ENCODE measurements at regions of chr12 and their contacts with region 1.

Region 1: DNA sequence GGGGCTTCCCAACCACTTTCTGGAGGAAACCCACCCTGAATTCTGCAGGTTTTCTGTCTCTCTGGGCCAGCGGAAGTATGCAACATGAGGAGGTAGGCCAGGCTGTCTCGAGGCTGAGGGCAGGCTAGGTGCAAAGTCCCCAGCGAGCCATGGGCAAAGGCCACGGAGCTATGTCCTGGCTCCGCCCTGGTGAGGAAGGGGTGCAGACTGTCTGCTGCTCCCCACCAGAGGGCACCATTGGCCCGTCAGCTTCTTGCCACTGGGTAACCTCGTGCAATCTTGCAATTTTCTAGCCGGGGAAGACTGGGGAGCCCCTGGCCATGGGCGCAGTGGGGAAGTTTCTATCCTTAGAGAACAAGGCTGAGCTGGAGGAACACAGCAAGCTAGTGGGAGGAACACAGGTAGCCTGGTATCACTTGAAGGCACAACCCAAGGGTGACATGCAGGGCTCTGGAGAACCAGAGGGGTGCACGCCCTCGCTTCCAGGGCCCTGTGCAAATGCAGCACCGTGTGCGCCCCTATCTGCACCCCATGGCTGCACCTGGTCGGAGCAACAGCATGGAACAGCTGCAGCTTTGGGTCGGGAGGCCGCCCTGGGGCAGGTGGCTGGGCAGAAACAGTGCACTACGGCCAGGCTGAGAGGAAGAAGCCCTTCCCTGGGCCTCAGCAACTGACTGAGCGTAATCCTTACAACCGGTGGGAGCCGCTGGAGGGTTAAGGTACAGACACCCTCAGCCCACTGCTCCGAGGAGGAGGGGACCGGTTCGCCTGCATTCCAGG is 27.6 kb upstream of the RPLP0 start:
- DNase-seq: peak; percentile 96
- H3K4me3 Mint-ChIP-seq: peak overlapping the region; percentile 49
- H3K27ac Mint-ChIP-seq: peak overlapping the region; percentile 84
- H3K4me1 Mint-ChIP-seq: peaks cover 88% of the 10 kb centered on the region
- H3K27me3 Mint-ChIP-seq: no peaks in the 10 kb centered on the region

Region 2: DNA sequence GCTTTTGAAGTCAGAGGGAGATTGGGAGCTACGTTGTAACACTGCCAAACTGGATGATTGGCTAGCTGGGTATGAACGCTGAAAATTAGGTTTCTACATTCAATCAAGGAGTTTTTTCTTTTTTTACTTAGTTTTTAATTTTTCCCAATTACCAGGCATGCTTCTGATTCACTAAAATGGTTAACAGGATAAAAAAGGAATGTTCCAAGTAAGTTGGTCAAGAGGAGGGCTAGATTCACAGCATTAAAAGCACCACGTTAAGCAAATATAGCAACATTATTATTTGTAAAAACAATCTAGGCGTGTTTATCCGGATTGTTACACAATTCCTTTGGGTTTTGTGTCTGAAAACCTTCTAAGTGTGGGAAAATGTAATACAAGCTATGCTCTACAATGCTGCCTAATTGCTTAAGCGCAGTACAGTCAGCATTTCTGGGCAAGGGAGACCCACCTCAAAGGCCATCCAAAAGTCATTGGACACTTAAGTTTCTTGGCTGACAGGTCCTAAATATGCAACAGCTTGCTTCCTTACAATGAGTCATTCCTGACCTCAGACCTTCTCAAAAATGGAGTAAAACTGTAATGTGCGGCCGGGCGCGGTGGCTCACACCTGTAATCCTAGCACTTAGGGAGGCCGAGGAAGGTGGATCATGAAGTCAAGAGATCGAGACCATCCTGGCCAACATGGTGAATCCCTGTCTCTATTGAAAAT is 28.7 kb before region 1 on chr12:
- CTCF ChIA-PET with region 1: interaction called, 75 read pairs
- intact Hi-C with region 1: loop called (anchors 1 kb)
- DNase-seq: peak; percentile 51
- H3K4me3 Mint-ChIP-seq: peak overlapping the region; percentile 93
- H3K27ac Mint-ChIP-seq: peak overlapping the region; percentile 99
- H3K4me1 Mint-ChIP-seq: peaks cover 42% of the 10 kb centered on the region
- H3K27me3 Mint-ChIP-seq: no peaks in the 10 kb centered on the region

Region 3: DNA sequence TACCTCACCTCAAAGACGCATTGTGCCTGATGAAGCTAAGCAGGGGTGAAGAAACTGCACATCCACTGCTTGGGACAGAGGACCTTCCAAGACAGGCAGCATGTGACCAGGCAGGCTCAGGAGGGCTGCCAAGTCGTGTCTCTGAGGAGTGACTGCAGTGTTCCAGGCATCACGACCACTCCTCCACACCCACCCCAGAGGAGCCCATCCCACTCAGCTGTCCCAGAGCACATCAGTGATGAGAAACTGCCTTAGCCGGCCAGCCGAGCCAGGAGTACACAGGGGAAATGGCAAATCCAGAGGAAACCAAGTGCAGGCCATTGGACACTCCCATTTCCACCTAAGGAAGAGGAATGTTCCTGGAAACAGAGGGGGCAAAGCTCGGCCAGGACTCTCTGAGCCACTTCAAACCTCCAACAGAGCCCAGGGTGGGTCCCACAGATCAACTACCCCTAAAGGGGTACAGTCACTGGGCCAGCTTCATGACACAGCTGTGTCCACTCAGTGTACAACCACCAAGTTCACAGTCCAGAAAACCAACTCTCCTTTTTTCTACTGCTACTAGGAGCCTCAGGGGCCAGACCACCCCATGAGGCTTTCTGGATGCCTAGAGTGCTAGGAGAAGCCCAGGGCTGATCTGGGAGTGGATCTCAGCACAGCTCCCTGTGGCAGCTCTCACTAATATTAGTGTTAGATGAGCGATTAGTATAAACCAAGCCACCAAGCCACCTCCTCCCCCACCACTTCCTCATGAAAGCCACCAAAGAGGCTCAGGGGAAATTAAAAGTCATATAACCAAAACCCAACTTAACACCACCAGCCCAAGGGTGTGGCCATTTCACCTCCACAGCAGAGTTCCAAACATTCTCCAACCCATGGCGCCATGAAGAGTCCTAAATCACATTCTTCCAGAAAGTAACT is 21.7 kb after region 1 on chr12:
- CTCF ChIA-PET with region 1: interaction called, 637 read pairs
- intact Hi-C with region 1: loop called (anchors 1 kb)
- DNase-seq: peak; percentile 69
- H3K4me3 Mint-ChIP-seq: peak overlapping the region; percentile 41
- H3K27ac Mint-ChIP-seq: peak overlapping the region; percentile 84
- H3K4me1 Mint-ChIP-seq: peaks cover 80% of the 10 kb centered on the region
- H3K27me3 Mint-ChIP-seq: no peaks in the 10 kb centered on the region

Region 4: DNA sequence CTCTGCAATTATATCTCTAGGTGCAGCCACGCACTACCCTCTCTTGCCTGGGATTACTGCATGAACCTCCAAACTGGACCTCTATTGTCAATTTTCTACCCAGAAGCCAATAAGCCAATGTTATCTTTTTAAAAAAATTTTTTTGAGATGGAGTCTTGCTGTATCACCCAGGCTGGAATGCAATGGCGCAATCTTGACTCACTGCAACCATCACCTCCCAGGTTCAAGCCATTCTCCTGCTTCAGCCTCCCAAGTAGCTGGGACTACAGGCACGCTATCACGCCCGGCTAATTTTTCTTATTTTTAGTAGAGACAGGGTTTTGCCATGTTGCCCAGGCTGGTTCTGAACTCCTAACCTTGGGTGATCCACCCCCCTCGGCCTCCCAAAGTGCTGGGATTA is 48.3 kb after region 1 on chr12:
- CTCF ChIA-PET with region 1: interaction called, 14 read pairs
- intact Hi-C with region 1: no loop called
- DNase-seq: no peak
- H3K4me3 Mint-ChIP-seq: no peak overlapping the region
- H3K27ac Mint-ChIP-seq: no peak overlapping the region
- H3K4me1 Mint-ChIP-seq: no peaks in the 10 kb centered on the region
- H3K27me3 Mint-ChIP-seq: no peaks in the 10 kb centered on the region

Region 5: DNA sequence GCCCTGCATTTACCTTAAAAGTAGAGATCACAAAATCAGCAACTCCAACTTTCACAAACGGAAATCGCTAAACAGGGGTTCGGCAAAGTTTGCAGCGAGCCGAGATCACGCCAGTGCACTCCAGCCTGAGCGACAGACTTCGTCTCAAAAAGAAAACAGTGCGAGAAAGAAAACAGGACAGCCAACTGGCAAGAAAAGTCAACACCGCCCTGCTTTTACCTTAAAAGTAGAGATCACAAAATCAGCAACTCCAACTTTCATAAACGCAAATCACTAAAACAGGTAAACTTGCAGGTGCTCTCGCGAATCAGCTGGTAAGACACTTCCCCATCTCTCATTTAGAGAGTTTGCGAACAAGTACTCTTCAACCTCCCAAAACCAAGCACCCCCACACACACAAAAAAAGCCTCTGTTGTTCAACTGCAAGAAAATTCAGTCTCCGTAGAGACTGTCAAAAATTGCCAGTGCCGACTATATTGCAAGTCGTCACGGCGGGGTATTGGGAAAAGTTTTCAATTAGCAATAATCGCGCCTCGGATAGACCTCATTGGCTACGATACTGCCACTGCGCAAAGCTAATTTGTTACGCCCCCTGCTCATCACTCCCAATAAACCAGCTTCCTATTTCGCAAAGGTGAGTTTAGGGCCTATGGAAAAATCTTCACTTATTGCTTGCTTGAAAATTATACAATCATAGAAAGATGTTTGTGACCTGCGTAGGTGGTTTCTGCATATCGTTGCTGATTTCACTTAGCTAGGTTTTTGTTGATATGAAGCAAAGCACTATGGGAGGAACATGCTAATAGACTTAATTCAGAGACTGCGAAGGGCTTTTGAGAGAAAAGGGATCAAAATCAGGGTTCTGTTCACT is 64.4 kb after region 1 on chr12 and contains the start of gene RNU4-1:
- CTCF ChIA-PET with region 1: interaction called, 48 read pairs
- intact Hi-C with region 1: loop called (anchors 1 kb)
- DNase-seq: peak; percentile 88
- H3K4me3 Mint-ChIP-seq: no peak within 1 kb of the TSS
- H3K27ac Mint-ChIP-seq: no peak within 1 kb of the TSS
- H3K4me1 Mint-ChIP-seq: peaks cover 6% of the 10 kb centered on the region
- H3K27me3 Mint-ChIP-seq: no peaks in the 10 kb centered on the region
- total RNA-seq, gene RNU4-1: 685 to 1,294 TPM

Region 6: DNA sequence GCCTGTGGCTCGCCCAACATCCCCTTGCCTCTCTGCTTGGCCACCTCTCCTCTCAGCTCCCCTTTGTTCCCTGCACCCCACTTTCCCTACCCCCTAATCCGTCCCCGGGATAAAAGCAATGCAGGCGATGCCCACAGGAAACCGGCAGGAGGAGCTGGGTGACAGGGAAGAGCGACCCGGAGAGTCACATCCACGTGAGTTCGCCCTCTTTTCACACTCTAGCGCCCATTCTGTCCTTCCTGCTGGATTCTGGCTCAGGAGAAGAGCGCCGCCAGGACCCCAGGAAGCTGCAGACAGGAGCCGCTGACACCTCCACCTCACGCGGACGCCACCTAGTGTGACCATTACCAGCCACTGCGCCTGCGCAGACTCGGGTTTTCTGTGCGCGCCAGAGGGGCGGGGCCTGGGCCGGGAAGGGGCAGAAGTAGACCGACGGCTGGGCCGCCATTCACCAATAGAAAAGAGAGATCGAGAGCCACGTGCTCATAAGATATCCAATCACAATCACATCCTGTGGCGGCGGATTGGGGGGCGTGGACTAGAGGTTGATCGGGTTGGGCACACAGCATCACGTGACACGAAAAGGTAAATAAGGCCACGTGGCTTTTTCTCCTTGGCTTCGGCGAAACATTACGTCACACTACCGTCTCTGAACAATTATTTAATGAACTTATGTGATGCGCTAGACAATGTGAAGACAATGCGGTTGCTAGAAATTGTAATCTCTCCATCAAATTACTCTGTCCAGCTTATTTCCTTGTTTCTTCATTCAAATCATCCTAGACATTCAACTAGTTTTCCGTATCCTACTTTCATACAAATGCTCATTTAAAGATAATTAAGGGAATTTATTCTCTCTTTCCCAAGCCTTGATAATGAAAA is 89.0 kb after region 1 on chr12:
- CTCF ChIA-PET with region 1: interaction called, 4 read pairs
- intact Hi-C with region 1: loop called (anchors 1 kb)
- DNase-seq: peak; percentile 100
- H3K4me3 Mint-ChIP-seq: peak overlapping the region; percentile 87
- H3K27ac Mint-ChIP-seq: peak overlapping the region; percentile 88
- H3K4me1 Mint-ChIP-seq: peaks cover 11% of the 10 kb centered on the region
- H3K27me3 Mint-ChIP-seq: no peaks in the 10 kb centered on the region

Region 7: DNA sequence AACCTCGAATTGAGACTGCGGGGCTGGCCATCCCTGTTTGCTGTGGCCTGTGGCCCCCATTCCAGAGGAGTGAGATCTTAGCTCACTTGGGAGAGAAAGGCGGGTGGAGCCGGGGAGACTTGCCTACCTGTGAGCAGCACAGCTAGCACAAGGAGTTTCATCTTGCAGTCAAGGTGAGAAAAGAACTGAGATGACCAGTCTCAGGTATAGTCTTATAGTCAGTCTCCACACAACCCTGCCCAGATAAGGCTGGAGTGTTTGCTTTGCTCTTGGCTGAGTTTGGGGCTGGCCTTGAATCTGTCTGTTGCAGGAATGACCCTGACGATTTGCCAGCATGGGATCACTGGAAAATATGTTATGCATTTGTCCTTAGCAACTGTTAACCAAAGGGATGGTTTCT is 99.1 kb after region 1 on chr12 and contains the start of gene PLA2G1B:
- CTCF ChIA-PET with region 1: no interaction called
- intact Hi-C with region 1: no loop called
- DNase-seq: no peak
- H3K4me3 Mint-ChIP-seq: no peak within 1 kb of the TSS
- H3K27ac Mint-ChIP-seq: no peak within 1 kb of the TSS
- H3K4me1 Mint-ChIP-seq: no peaks in the 10 kb centered on the region
- H3K27me3 Mint-ChIP-seq: peaks cover 3% of the 10 kb centered on the region
- total RNA-seq, gene PLA2G1B: not detected